Sigmoid colon (tissue), 7 donors: ENCODE measurements at regions of chr10 and their contacts with region 1.

Region 1: DNA sequence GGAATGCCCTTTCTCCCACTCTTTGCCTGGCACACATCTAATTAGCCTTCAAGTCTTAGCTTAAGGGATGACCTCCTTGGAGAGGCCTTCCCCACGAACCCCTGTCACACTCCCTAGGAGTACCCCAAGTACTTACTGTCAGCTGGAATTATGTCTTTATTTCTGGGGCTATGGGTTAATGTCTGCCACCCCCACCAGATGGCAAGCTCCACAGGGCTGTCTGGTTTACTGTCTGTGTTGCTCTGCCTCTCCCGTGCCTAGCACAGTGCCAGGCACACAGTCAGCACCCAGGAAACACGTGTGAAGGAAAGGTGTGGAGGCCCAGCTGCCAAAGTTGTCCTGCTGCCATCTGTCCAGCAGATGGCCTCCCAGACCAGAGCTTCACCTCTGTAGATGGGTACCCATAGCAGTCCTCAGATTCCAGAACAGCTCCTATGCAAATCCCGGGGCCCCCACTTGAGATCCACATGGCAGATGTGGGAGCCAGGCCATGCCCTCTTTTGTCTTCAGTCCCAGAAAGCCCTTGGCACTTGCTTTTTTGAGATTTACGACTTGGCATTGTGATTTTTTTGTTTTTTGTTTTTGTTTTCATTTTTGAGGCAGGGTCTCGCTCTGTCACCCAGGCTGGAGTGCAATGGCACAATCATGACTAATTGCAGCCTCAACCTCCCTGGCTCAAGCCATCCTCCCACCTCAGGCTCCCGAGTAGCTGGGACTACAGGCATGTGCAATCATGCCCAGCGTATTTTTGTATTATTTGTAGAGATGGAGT is 17.2 kb upstream of the PALD1 start:
- DNase-seq: peak; percentile 80
- H3K4me3 ChIP-seq: no peak overlapping the region
- H3K27ac ChIP-seq: peak overlapping the region; percentile 39 to 88 (median 66)
- H3K4me1 ChIP-seq: peaks cover 0 to 56% (median 35%) of the 10 kb centered on the region in 4 donors
- H3K27me3 ChIP-seq: no peaks in the 10 kb centered on the region
- CTCF ChIP-seq: peak; percentile 75 to 91 (median 82)
- EP300 ChIP-seq: no peak
- POLR2A ChIP-seq: no peak

Region 2: GRCh38 chr10:70227548-70228320 is 233.7 kb before region 1 on chr10:
- intact Hi-C with region 1: loop called (anchors 5 kb)
- DNase-seq: no peak
- H3K4me3 ChIP-seq: no peak overlapping the region
- H3K27ac ChIP-seq: peak overlapping the region; percentile 2 to 64 (median 52)
- H3K4me1 ChIP-seq: peaks cover 0 to 46% (median 29%) of the 10 kb centered on the region in 4 donors
- H3K27me3 ChIP-seq: no peaks in the 10 kb centered on the region
- CTCF ChIP-seq: no peak
- EP300 ChIP-seq: no peak
- POLR2A ChIP-seq: peak in 1 of 2 donors; percentile 8

Region 3: GRCh38 chr10:70363971-70364771 is 97.2 kb before region 1 on chr10:
- intact Hi-C with region 1: loop called (anchors 5 kb)
- DNase-seq: peak; percentile 98
- H3K4me3 ChIP-seq: peak overlapping the region; percentile 6 to 20 (median 8)
- H3K27ac ChIP-seq: peak overlapping the region; percentile 85 to 92 (median 88)
- H3K4me1 ChIP-seq: peaks cover 0 to 34% (median 26%) of the 10 kb centered on the region in 4 donors
- H3K27me3 ChIP-seq: no peaks in the 10 kb centered on the region
- CTCF ChIP-seq: peak; percentile 87 to 97 (median 93)
- EP300 ChIP-seq: no peak
- POLR2A ChIP-seq: no peak

Region 4: DNA sequence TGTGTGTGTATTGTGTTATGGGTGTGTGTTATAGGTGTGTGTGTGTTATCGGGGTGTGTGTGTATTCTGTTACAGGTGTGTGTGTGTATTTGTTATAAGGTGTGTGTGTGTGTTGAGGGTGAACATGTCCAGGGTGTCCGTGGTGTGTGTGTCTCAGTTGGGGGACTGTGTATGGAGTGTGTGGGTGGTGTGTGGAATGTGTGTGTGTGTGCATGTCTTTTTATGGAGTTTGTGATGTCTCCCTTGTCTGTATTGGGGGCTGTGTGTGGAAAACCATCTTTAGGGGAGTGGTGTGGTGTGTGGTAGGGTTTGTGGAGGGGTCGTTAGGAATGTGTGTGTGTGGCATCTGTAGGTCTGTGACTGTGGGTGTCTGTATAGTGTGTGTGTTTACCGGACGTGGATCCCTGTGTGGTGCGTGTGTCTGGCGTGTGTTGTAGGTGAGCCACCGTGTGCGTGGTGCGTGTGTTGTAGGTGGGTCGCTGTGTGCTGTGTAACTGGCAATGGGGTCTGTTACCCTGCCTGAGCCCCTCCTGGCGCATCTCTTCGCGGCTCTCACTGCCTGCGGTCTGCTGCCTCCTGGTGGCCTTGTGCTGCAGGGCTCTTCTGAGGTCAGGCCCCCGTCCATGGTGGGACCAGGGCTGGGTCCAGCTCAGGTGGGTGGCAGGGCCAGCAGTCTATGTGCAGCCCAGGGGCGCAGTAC is 78.8 kb after region 1 on chr10:
- intact Hi-C with region 1: loop called (anchors 1 kb)
- DNase-seq: no peak
- H3K4me3 ChIP-seq: no peak overlapping the region
- H3K27ac ChIP-seq: no peak overlapping the region
- H3K4me1 ChIP-seq: peaks cover 0 to 12% (median 2%) of the 10 kb centered on the region in 4 donors
- H3K27me3 ChIP-seq: no peaks in the 10 kb centered on the region
- CTCF ChIP-seq: peak; percentile 65 to 82 (median 74)
- EP300 ChIP-seq: no peak
- POLR2A ChIP-seq: no peak

Region 5: GRCh38 chr10:70758757-70759514 is 297.5 kb after region 1 on chr10:
- intact Hi-C with region 1: loop called (anchors 1 kb)
- DNase-seq: peak; percentile 85
- H3K4me3 ChIP-seq: no peak overlapping the region
- H3K27ac ChIP-seq: no peak overlapping the region
- H3K4me1 ChIP-seq: peaks cover 0 to 3% (median 0%) of the 10 kb centered on the region in 4 donors
- H3K27me3 ChIP-seq: no peaks in the 10 kb centered on the region
- CTCF ChIP-seq: peak; percentile 57 to 77 (median 64)
- EP300 ChIP-seq: no peak
- POLR2A ChIP-seq: no peak

Region 6: GRCh38 chr10:70880077-70880534 is 418.7 kb after region 1 on chr10:
- intact Hi-C with region 1: loop called (anchors 10 kb)
- DNase-seq: peak; percentile 84
- H3K4me3 ChIP-seq: no peak overlapping the region
- H3K27ac ChIP-seq: no peak overlapping the region
- H3K4me1 ChIP-seq: no peaks in the 10 kb centered on the region
- H3K27me3 ChIP-seq: no peaks in the 10 kb centered on the region
- CTCF ChIP-seq: peak; percentile 75 to 95 (median 86)
- EP300 ChIP-seq: no peak
- POLR2A ChIP-seq: no peak